ENCODE measurements at regions of chr12 and their contacts with region 1.

Region 1: DNA sequence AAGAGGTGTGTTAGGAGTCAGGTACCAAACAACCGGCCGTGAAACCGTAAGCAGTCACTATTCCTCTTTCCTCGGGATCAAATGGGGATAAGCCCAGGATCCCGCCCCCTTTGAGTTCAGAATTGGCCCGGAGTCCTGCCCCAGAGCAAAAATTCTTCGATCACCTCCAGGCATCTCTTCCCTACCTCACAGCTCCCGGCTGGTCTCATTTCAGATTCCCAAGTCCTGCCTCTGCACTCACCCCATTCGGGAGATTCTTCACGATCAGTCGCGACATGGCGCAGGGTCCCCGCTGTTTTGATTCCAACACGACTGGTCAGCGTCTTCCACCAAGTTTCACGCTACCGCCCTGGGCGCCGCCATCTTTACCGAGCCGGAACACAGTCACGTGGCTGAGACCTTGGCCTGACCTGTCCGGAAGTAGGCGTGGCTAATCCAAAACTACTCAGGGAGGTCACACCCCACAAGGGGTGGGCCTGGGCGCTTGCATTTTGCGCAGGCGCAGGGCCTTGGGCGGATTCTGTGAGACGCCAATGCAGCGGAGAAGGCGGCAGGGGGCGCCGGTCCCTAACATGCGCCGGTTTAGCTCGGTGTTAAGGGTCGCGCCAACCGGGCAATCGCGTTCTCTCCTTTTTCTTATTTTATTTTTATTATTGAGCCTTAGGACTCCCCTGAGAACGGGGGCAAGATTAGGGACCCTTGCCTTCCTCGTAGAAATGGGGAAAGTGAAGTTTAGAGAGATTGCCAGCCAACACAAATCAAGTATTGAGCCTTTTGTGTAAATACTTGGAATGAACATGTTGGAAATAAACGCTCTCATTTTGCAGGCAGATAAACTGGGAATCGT is at the start of gene RBM19:
- DNase-seq: peak; percentile 98
- ATAC-seq: peak; percentile 76
- H3K4me3 Mint-ChIP-seq: peak within 1 kb of the TSS; percentile 99
- H3K27ac Mint-ChIP-seq: peak within 1 kb of the TSS; percentile 99
- H3K4me1 Mint-ChIP-seq: peaks cover 50% of the 10 kb centered on the region
- H3K27me3 Mint-ChIP-seq: no peaks in the 10 kb centered on the region
- total RNA-seq, gene RBM19: 79.6 to 93.5 TPM

Region 2: DNA sequence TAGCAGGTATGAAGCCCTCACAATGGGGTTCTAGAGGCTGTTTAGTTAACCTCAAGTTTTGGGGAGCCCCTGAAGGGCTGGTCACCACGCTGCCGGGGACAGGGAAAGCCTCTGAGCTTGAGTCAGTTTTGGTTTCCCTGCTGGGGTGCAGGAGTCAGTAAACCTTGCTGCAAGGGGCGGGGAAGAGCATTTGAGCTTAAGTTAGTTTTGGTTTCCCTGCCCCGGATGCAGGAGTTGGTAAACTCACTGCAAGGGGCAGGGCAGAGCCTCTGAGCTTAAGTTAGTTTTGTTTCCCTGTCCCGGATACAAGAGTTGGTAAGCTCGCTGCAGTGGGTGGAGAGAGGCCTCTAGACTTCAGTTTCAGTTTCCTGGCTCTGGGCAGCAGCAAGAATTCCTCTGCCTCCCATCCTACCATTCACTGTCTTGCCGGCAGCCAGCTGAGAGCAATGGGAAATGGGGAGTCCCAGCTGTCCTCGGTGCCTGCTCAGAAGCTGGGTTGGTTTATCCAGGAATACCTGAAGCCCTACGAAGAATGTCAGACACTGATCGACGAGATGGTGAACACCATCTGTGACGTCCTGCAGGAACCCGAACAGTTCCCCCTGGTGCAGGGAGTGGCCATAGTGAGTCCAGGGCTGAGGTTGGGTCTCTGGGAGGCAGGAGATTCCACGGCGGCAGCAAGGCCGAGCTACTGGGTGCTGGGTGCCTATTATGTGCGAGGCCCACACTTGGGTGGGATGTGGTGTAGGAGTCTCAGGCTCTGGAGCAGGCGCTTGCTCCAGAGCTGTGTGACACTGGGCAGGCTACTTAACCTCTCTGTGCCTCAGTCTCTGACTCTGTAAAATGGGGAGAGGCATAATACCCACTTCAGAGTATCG is 987.8 kb before region 1 on chr12 and contains the start of gene OAS2:
- CTCF ChIA-PET with region 1: no interaction called
- POLR2A ChIA-PET with region 1: no interaction called
- intact Hi-C with region 1: loop called in 1 of 2 experiments (anchors 10 kb)
- DNase-seq: peak; percentile 90
- ATAC-seq: peak; percentile 93
- H3K4me3 Mint-ChIP-seq: peak within 1 kb of the TSS; percentile 100
- H3K27ac Mint-ChIP-seq: peak within 1 kb of the TSS; percentile 100
- H3K4me1 Mint-ChIP-seq: peaks cover 44% of the 10 kb centered on the region
- H3K27me3 Mint-ChIP-seq: no peaks in the 10 kb centered on the region
- total RNA-seq, gene OAS2: 148 to 278 TPM

Region 3: GRCh38 chr12:113334786-113335540 is 631.2 kb before region 1 on chr12 and contains the start of gene SLC8B1:
- CTCF ChIA-PET with region 1: no interaction called
- POLR2A ChIA-PET with region 1: no interaction called
- intact Hi-C with region 1: loop called in 1 of 2 experiments (anchors 1 kb)
- DNase-seq: peak; percentile 92
- ATAC-seq: peak; percentile 98
- H3K4me3 Mint-ChIP-seq: peak within 1 kb of the TSS; percentile 89
- H3K27ac Mint-ChIP-seq: peak within 1 kb of the TSS; percentile 76
- H3K4me1 Mint-ChIP-seq: peaks cover 17% of the 10 kb centered on the region
- H3K27me3 Mint-ChIP-seq: no peaks in the 10 kb centered on the region
- total RNA-seq, gene SLC8B1: 17.9 to 19.4 TPM

Region 4: DNA sequence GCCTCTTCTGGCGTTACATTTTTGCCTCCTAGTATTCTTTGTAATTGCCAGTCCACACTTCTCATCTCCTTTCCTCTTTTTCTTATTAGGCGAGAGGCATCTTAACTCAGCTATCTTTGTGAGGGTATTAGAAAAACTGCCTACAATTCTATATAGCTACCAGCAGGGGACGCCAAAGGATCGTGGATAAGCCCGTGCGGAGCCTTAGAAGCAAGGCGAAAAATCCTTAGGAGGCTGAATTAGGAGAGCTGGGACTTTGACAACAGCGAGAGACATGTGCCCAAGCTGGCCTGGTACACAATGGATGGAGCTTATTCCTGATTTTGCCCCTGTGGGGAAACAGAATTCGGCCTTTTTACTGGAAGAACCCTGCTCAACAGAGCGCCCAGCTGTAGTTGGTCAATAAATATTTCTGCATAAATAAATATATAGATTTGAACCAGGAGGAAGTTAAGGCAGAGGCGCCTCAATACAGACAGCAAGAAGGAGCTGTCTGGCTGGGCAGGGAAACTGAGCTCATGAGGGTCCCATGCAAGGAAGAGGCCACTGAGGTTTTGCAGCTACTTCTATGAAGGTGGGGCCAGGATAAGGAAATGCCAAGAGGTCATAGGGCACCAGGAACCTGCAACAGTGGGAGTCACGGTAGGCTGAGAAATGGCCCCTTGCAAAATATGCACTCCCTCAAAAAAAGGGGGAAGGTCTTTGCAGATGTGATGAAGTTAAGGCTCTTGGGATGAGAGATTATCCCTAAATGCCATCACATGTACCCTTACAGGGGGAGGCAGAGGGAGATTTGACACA is 14.6 kb after region 1 on chr12:
- CTCF ChIA-PET with region 1: interaction called, 17 read pairs
- POLR2A ChIA-PET with region 1: interaction called, 6 read pairs
- intact Hi-C with region 1: no loop called
- DNase-seq: peak; percentile 62
- ATAC-seq: peak; percentile 69
- H3K4me3 Mint-ChIP-seq: no peak overlapping the region
- H3K27ac Mint-ChIP-seq: no peak overlapping the region
- H3K4me1 Mint-ChIP-seq: no peaks in the 10 kb centered on the region
- H3K27me3 Mint-ChIP-seq: peaks cover 10% of the 10 kb centered on the region

Region 5: GRCh38 chr12:114030451-114030850 is 64.3 kb after region 1 on chr12:
- CTCF ChIA-PET with region 1: no interaction called
- POLR2A ChIA-PET with region 1: no interaction called
- intact Hi-C with region 1: no loop called
- DNase-seq: no peak
- ATAC-seq: no peak
- H3K4me3 Mint-ChIP-seq: no peak overlapping the region
- H3K27ac Mint-ChIP-seq: no peak overlapping the region
- H3K4me1 Mint-ChIP-seq: no peaks in the 10 kb centered on the region
- H3K27me3 Mint-ChIP-seq: peaks cover 15% of the 10 kb centered on the region

Region 6: GRCh38 chr12:114209861-114210260 is 243.7 kb after region 1 on chr12:
- CTCF ChIA-PET with region 1: no interaction called
- POLR2A ChIA-PET with region 1: no interaction called
- intact Hi-C with region 1: no loop called
- DNase-seq: no peak
- ATAC-seq: no peak
- H3K4me3 Mint-ChIP-seq: no peak overlapping the region
- H3K27ac Mint-ChIP-seq: no peak overlapping the region
- H3K4me1 Mint-ChIP-seq: no peaks in the 10 kb centered on the region
- H3K27me3 Mint-ChIP-seq: no peaks in the 10 kb centered on the region

Region 7: GRCh38 chr12:114245555-114245954 is 279.4 kb after region 1 on chr12:
- CTCF ChIA-PET with region 1: no interaction called
- POLR2A ChIA-PET with region 1: no interaction called
- intact Hi-C with region 1: no loop called
- DNase-seq: no peak
- ATAC-seq: no peak
- H3K4me3 Mint-ChIP-seq: no peak overlapping the region
- H3K27ac Mint-ChIP-seq: no peak overlapping the region
- H3K4me1 Mint-ChIP-seq: no peaks in the 10 kb centered on the region
- H3K27me3 Mint-ChIP-seq: peaks cover 7% of the 10 kb centered on the region